Ovary (tissue), 10 donors: ENCODE measurements at regions of chrX and their contacts with region 1.

Region 1: DNA sequence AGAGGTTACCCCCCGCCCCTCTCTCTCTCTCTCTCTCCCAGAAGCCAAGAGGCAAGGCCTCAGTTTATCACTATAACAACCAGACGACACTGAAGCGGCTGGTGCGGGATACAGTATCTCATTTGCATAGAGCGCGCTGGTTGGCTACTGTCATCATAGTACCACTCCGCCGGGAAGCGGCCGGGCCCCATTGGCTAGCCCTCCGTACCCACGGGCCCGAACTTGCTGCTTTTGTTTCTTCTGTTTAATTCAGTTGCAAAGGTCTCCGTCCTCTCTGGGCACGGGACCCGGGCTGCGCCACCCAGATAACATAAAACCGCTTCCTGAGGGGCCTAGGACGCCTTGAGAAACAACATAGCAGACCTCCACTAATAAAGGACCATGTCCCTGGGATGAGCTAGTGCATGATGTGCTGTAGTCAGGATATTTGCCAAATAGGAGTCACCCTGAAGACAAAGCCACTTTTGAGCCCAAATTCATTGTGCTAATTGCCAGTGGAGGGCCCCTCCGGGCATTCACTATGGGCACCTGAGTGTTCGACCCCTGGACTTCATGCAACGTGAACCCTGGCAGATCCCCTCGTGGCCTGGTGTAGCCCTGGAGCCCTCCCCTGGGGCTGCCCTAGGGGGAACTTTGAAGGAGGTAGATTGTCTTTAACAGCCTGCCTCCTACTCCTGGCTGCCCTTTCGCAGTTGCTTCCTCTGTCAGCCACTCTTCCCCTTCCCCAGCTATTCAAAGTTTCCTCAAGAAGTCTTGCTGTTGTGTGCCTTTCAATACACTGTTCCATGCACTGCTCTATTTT is at the start of gene PCYT1B:
- DNase-seq: peak; percentile 59 to 75 (median 68)
- H3K4me3 ChIP-seq: peak within 1 kb of the TSS; percentile 11
- H3K27ac ChIP-seq: no peak within 1 kb of the TSS
- H3K4me1 ChIP-seq: no peaks in the 10 kb centered on the region
- H3K27me3 ChIP-seq: no peaks in the 10 kb centered on the region
- CTCF ChIP-seq: no peak
- EP300 ChIP-seq: no peak
- POLR2A ChIP-seq: no peak
- total RNA-seq, gene PCYT1B: 1.3 to 4.1 (median 2.4) TPM

Region 2: GRCh38 chrX:24375600-24376131 is 271.8 kb before region 1 on chrX:
- intact Hi-C with region 1: loop called in 1 of 4 experiments (anchors 5 kb)
- DNase-seq: no peak
- H3K4me3 ChIP-seq: no peak overlapping the region
- H3K27ac ChIP-seq: no peak overlapping the region
- H3K4me1 ChIP-seq: peaks cover 5% of the 10 kb centered on the region
- H3K27me3 ChIP-seq: no peaks in the 10 kb centered on the region
- CTCF ChIP-seq: no peak
- EP300 ChIP-seq: no peak
- POLR2A ChIP-seq: no peak